PC-3 (cell line): ENCODE measurements at regions of chr10 and their contacts with region 1.

Region 1: GRCh38 chr10:60757420-60757895 is 20.8 kb upstream of the CDK1 start:
- DNase-seq: peak; percentile 40
- ATAC-seq: peak; percentile 37
- H3K4me3 ChIP-seq: no peak overlapping the region
- H3K27ac ChIP-seq: no peak overlapping the region
- H3K4me1 ChIP-seq: peaks cover 8% of the 10 kb centered on the region; the same call in 1 of the 2 replicates
- H3K27me3 ChIP-seq: no peaks in the 10 kb centered on the region
- CTCF ChIP-seq: no peak

Region 2: GRCh38 chr10:60739581-60739980 is 17.9 kb before region 1 on chr10:
- CTCF ChIA-PET with region 1: no interaction called
- POLR2A ChIA-PET with region 1: interaction called, 3 read pairs
- intact Hi-C with region 1: loop called (anchors 2 kb)
- DNase-seq: peak; percentile 66
- ATAC-seq: no peak
- H3K4me3 ChIP-seq: no peak overlapping the region
- H3K27ac ChIP-seq: no peak overlapping the region
- H3K4me1 ChIP-seq: peaks cover 34% of the 10 kb centered on the region
- H3K27me3 ChIP-seq: no peaks in the 10 kb centered on the region
- CTCF ChIP-seq: no peak